ENCODE measurements at regions of chr1 and their contacts with region 1.

Region 1: DNA sequence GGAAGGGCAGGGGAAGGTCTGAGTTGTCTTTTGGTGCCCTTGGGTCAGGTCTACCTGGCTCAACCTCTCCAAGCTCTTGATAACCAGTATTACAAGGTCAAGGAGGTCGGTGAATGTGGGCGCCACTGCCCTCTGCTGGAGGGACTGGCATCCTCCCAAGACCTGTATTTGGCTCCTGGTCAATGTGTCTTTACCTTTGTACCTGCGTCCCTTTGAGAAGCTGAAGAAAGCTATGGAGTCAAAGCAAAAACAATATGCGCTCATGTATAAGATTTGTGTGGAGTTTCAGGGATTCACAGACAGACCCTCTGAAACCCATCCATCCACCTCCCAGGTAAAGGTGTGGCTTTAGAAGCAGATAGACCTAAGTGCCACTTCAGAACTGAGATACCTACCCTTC is 61.8 kb upstream of the NBL1 start:
- DNase-seq: peak; percentile 75 to 94
- H3K4me3 ChIP-seq: no peak overlapping the region
- H3K27ac ChIP-seq: no peak overlapping the region
- H3K4me1 ChIP-seq: no peaks in the 10 kb centered on the region
- H3K27me3 ChIP-seq: no peaks in the 10 kb centered on the region
- CTCF ChIP-seq: peak; percentile 90 to 97 (median 91)
- EP300 ChIP-seq: no peak
- POLR2A ChIP-seq: no peak
- RAD21 ChIP-seq: peak; percentile 91 to 94

Region 2: DNA sequence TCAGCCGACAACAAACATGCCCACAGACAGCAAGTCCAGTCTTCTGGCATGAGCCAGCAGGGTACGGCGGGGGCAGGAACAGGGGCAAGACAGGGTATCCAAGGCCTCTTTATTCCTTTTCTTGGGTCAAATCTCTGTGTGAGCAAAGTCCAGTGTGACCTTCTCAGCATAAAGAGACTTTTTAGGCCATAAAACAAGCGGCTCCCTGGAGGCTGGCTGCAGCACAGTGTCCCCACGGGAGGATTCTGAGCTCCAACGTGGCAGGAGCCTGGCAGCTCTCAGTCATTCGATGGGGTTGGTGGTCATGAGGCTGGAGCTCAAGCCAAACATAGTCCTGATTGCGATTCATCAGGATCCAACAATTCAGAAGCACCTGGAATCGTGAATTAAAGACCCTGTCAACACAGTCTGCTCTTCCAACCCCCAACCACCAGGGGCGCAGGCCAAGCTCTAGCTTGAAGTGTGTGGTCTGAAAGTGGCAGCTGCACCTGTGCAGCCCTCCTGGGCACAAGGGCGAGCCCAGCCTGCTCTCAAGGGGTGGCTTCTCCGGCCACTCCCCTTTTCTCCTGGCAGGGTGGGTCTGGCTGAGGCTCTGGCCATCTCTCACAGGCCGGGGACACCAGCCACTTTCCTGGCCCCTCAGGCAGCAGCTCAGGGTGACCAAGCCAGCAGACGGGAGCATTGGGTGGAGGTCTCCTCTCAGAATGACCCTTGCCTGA is 208.1 kb before region 1 on chr1:
- CTCF ChIA-PET with region 1: interaction called, 20 read pairs
- POLR2A ChIA-PET with region 1: no interaction called
- DNase-seq: peak in 1 of 2 experiments; percentile 78
- H3K4me3 ChIP-seq: no peak overlapping the region
- H3K27ac ChIP-seq: no peak overlapping the region
- H3K4me1 ChIP-seq: no peaks in the 10 kb centered on the region
- H3K27me3 ChIP-seq: no peaks in the 10 kb centered on the region
- CTCF ChIP-seq: peak; percentile 54 to 80 (median 79)
- EP300 ChIP-seq: no peak
- POLR2A ChIP-seq: no peak
- RAD21 ChIP-seq: peak; percentile 35 to 41; a peak in 3 of 4 replicates

Region 3: DNA sequence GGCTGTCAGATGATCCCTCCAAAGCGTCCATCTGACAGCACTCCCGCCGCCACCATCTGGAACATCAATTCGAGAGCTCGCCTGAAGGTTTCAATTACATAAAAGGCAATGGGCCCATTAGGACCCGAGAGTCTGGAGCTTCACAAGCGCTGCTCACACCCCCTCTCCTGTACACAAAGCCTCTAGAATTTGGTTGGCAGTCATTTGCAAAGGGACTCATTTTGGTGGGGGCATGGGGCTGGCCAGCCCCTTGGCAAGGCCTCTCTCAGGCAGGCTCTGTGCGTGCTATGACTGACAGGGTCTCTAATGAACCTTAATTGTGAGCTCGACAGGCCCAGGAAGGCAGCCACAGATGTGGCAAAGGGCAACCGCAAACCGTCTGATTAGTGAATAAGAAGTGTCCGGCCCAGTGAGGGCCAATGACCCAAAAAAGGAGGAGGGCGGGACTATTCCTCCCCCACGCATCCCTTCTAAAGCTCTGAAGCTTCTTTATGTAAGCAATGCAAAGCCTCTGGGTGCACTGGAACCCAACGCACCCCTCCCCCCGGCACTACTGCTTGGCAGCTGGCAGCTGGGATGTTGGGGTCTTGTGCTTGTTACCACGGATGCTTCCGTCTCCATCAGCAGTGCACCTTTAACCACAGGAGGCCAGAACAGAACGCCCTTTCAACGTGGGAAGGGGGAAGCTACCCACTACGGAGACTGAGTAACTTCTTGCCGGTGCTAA is 176.4 kb before region 1 on chr1:
- CTCF ChIA-PET with region 1: interaction called, 14 read pairs
- POLR2A ChIA-PET with region 1: no interaction called
- DNase-seq: no peak
- H3K4me3 ChIP-seq: no peak overlapping the region
- H3K27ac ChIP-seq: no peak overlapping the region
- H3K4me1 ChIP-seq: peaks cover 18 to 31% (median 22%) of the 10 kb centered on the region in 4 experiments
- H3K27me3 ChIP-seq: no peaks in the 10 kb centered on the region
- CTCF ChIP-seq: no peak
- EP300 ChIP-seq: no peak
- POLR2A ChIP-seq: no peak
- RAD21 ChIP-seq: no peak

Region 4: GRCh38 chr1:19448491-19449439 is 133.5 kb before region 1 on chr1:
- CTCF ChIA-PET with region 1: interaction called, 12 read pairs
- POLR2A ChIA-PET with region 1: no interaction called
- DNase-seq: no peak
- H3K4me3 ChIP-seq: no peak overlapping the region
- H3K27ac ChIP-seq: no peak overlapping the region
- H3K4me1 ChIP-seq: peaks cover 1 to 22% (median 10%) of the 10 kb centered on the region in 4 experiments
- H3K27me3 ChIP-seq: no peaks in the 10 kb centered on the region
- CTCF ChIP-seq: no peak
- EP300 ChIP-seq: no peak
- POLR2A ChIP-seq: no peak
- RAD21 ChIP-seq: no peak

Region 5: GRCh38 chr1:19557609-19558051 is 24.7 kb before region 1 on chr1:
- CTCF ChIA-PET with region 1: interaction called, 26 read pairs
- POLR2A ChIA-PET with region 1: no interaction called
- DNase-seq: no peak
- H3K4me3 ChIP-seq: no peak overlapping the region
- H3K27ac ChIP-seq: no peak overlapping the region
- H3K4me1 ChIP-seq: no peaks in the 10 kb centered on the region
- H3K27me3 ChIP-seq: no peaks in the 10 kb centered on the region
- CTCF ChIP-seq: no peak
- EP300 ChIP-seq: no peak
- POLR2A ChIP-seq: no peak
- RAD21 ChIP-seq: no peak

Region 6: DNA sequence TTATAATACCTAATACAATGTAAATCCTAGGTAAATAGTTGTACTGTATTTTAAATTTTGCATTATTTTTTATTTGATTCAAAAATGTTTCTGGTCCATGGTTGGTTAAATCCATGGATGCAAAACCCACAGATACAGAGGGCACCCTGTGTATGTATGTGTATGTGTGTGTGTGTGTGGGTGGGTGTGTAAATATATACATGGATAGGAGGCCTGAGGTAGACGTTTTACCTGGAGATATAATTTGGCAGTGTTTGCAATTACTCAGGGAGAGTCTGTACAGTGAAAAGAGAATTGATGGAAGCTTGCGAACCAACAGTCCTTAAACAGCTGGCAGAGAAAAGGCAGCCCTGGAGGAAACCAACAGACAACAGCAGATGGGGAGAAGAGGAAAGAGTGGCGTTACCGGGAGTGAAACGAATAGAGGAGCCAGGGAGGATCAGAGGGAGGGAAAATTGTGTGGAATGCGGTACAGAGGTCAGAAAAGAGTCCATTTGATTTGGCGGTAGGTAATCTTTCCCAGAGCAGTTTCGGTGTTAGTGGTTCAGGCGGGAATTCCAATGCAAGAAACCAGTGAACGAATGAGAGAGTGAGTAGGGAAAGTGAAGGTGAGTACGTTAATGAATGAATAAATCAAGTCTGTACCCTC is 13.9 kb after region 1 on chr1:
- CTCF ChIA-PET with region 1: interaction called, 37 read pairs
- POLR2A ChIA-PET with region 1: interaction called, 5 read pairs
- DNase-seq: no peak
- H3K4me3 ChIP-seq: peak overlapping the region; percentile 77 to 95 (median 85)
- H3K27ac ChIP-seq: peak overlapping the region; percentile 86
- H3K4me1 ChIP-seq: peaks cover 0 to 2% (median 0%) of the 10 kb centered on the region in 4 experiments; a peak in 2 of 7 replicates
- H3K27me3 ChIP-seq: no peaks in the 10 kb centered on the region
- CTCF ChIP-seq: no peak
- EP300 ChIP-seq: peak in 1 of 2 experiments; percentile 64; a peak in 1 of 3 replicates
- POLR2A ChIP-seq: no peak
- RAD21 ChIP-seq: no peak

Region 7: GRCh38 chr1:19651141-19651737 is 68.9 kb after region 1 on chr1:
- CTCF ChIA-PET with region 1: interaction called, 23 read pairs
- POLR2A ChIA-PET with region 1: interaction called, 3 read pairs
- DNase-seq: peak in 1 of 2 experiments; percentile 71
- H3K4me3 ChIP-seq: no peak overlapping the region
- H3K27ac ChIP-seq: no peak overlapping the region
- H3K4me1 ChIP-seq: peaks cover 0 to 3% (median 2%) of the 10 kb centered on the region in 4 experiments; a peak in 4 of 7 replicates
- H3K27me3 ChIP-seq: peaks cover 0 to 4% (median 1%) of the 10 kb centered on the region in 4 experiments; a peak in 4 of 7 replicates
- CTCF ChIP-seq: peak; percentile 78 to 84 (median 78)
- EP300 ChIP-seq: no peak
- POLR2A ChIP-seq: no peak
- RAD21 ChIP-seq: peak; percentile 89 to 91

Region 8: GRCh38 chr1:19688041-19688842 is 105.9 kb after region 1 on chr1:
- CTCF ChIA-PET with region 1: no interaction called
- POLR2A ChIA-PET with region 1: no interaction called
- DNase-seq: no peak
- H3K4me3 ChIP-seq: no peak overlapping the region
- H3K27ac ChIP-seq: no peak overlapping the region
- H3K4me1 ChIP-seq: peaks cover 3 to 13% (median 10%) of the 10 kb centered on the region in 4 experiments
- H3K27me3 ChIP-seq: no peaks in the 10 kb centered on the region
- CTCF ChIP-seq: no peak
- EP300 ChIP-seq: no peak
- POLR2A ChIP-seq: no peak
- RAD21 ChIP-seq: no peak